ENCODE measurements at regions of chr15 and their contacts with region 1.

Region 1: GRCh38 chr15:99059010-99059981 is 45.6 kb upstream of the SYNM start:
- DNase-seq: peak; percentile 89
- CTCF ChIP-seq: peak; percentile 96

Region 2: GRCh38 chr15:98518823-98519561 is 540.3 kb before region 1 on chr15:
- in situ Hi-C with region 1: loop called (anchors 25 kb)
- DNase-seq: peak; percentile 80
- CTCF ChIP-seq: peak; percentile 64

Region 3: DNA sequence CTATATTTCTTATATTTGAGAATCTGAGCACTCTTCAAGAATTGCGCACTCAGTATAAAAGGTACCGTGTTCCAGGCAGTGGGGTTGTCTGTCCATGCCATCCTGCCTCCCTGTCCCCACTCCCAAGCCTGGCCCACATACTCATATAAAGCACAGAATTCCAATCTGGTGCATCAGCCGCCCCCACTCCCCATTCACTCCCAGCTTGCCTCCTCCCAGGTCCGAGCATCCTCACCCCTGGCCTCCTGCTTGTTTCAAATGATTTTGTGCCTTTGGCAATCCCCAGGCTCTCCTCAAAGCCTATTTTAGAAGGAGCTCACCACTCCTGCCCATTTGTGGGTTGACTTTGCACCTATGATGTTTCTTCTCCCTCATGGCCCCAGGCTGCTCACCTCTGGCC is 433.1 kb before region 1 on chr15:
- in situ Hi-C with region 1: no loop called
- DNase-seq: no peak
- CTCF ChIP-seq: no peak

Region 4: DNA sequence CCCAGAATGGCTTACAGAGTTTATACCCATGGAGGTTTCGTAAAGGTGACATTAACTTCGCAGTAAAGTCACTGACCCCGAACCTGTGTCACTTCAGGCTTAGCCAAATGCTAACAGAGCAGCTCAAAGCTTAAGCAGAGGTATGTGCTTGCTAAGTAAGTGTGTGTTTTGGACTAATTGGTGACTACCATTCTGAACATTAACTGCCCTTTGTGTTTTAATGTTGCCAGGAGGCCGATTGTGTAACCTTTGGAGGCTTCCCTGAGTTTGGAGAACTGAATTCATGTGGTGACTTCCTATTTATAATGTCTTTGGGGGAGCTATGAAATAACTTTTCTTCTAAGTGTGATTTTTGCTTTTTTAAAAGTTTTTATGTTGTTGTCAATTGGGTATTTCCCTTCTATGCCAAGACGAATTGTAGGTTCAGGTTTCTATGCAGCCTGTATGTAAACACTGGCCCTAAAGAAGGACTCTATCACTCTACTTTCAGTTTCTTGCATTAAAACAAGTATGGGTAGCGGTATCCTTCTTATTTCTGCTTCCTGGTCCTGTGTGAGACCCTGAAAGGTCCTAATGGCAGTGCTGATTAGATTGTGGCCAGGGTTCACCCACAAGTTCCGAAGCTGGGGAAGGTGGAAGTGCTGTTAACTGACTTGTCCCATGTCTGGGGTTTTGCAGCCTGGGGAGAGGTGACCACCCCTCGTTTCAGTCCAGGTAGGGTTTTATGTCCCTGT is 324.7 kb before region 1 on chr15:
- in situ Hi-C with region 1: no loop called
- DNase-seq: no peak
- CTCF ChIP-seq: no peak

Region 5: GRCh38 chr15:98771541-98771940 is 287.8 kb before region 1 on chr15:
- in situ Hi-C with region 1: no loop called
- DNase-seq: no peak
- CTCF ChIP-seq: no peak

Measured in GM13977 (cell line).